Gastrocnemius medialis (tissue), 4 donors: ENCODE measurements at regions of chr11 and their contacts with region 1.

Region 1: GRCh38 chr11:12235947-12236743 is 125.8 kb downstream of the MICAL2 start:
- DNase-seq: peak in 1 of 2 donors; percentile 81
- ATAC-seq: peak; percentile 80 to 81
- H3K4me3 ChIP-seq: no peak overlapping the region
- H3K27ac ChIP-seq: peak overlapping the region; percentile 52 to 92 (median 76)
- H3K4me1 ChIP-seq: peaks cover 7 to 12% of the 10 kb centered on the region in 2 donors
- H3K27me3 ChIP-seq: no peaks in the 10 kb centered on the region
- CTCF ChIP-seq: peak; percentile 55 to 75 (median 69)
- POLR2A ChIP-seq: peak; percentile 27 to 59

Region 2: DNA sequence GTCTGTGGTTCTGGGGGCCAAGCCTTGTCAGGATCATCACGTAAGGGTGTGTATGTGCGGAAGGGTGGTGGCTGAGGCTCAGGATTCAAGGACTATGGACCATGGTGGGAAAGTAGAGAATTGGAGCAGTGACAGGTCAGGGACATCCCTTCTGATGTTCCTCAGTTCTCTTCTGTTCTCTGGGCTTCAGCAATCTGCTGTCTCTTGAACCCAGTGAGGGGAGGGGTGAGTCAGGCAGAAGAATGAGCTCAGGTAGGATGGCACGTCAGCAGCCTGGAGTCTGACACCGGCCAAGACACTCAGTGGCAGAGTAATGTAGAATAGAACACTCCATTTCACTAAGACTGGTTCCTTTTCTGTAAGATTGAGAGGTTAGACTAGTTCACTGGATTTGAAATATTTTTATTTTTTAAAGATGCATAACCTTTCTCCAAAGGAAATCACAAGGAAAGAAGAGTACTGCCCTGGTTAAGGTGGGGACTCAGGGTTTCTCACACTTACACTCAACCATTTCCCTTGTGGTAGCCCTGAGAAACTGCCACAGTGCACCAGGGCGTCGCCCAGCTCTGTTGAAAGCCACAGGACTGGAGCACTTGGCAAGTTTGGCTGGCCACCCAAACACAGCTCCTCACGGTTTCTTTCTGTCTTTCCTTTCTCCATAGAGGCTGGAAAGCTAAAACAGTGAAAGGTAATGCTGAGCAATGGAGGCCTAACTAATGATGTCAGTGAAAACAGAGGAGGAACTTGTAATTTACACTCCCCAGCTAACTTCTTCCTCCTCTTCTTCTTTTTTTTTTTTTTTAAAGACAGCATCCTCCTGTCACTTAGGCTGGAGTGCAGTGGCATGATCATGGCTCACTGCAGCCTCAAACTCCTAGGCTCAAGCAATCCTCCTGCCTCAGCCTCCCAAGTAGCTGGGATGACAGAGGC is 148.8 kb before region 1 on chr11:
- in situ Hi-C with region 1: no loop called
- intact Hi-C with region 1: loop called (anchors 5 kb)
- DNase-seq: peak in 1 of 2 donors; percentile 41
- ATAC-seq: peak in 1 of 2 donors; percentile 21
- H3K4me3 ChIP-seq: no peak overlapping the region
- H3K27ac ChIP-seq: peak overlapping the region; percentile 69 to 84 (median 78)
- H3K4me1 ChIP-seq: peaks cover 16 to 37% of the 10 kb centered on the region in 2 donors
- H3K27me3 ChIP-seq: peaks cover 0 to 3% (median 0%) of the 10 kb centered on the region in 3 donors
- CTCF ChIP-seq: peak in 1 of 5 experiments; percentile 14
- POLR2A ChIP-seq: no peak

Region 3: DNA sequence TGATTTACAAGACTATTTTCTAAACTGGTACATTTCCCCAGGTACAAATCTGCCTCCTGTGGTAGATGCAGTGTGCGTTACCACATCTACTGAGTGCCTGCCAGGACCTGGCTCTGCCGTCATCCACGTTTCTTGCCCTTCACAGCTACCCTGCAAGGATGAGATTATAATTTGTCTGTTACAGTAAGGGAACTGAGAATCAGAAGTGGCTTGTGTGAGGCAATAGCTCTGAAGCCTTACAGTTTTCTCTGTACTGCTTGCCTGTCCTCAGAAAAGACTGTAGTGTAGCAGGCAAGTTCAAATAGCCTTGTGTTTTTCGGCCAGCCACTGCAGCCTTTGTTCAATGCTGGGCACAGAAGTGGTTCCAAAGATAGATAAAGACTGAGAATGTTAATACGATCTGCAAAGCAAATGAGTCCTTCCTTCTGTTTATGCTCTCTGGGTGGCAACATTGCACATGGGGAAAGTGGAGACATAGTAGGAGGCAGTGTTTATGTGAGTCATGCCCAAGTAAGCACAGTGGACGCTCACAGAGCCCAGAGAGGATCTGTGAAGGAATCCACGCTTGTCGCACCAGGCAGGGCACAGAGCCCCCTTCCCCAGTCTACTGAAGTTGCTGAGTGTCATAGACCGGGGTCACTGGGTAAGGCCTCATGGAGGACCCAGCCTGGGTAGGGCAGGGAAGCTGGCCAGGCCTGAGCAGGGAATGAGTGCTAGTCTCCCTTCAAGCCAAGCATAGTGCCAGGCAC is 76.6 kb before region 1 on chr11:
- in situ Hi-C with region 1: no loop called
- intact Hi-C with region 1: loop called (anchors 1 kb)
- DNase-seq: peak; percentile 38 to 49
- ATAC-seq: peak; percentile 90 to 93
- H3K4me3 ChIP-seq: no peak overlapping the region
- H3K27ac ChIP-seq: peak overlapping the region; percentile 62 to 93 (median 74)
- H3K4me1 ChIP-seq: peaks cover 11 to 30% of the 10 kb centered on the region in 2 donors
- H3K27me3 ChIP-seq: no peaks in the 10 kb centered on the region
- CTCF ChIP-seq: no peak
- POLR2A ChIP-seq: peak; percentile 17 to 68

Region 4: DNA sequence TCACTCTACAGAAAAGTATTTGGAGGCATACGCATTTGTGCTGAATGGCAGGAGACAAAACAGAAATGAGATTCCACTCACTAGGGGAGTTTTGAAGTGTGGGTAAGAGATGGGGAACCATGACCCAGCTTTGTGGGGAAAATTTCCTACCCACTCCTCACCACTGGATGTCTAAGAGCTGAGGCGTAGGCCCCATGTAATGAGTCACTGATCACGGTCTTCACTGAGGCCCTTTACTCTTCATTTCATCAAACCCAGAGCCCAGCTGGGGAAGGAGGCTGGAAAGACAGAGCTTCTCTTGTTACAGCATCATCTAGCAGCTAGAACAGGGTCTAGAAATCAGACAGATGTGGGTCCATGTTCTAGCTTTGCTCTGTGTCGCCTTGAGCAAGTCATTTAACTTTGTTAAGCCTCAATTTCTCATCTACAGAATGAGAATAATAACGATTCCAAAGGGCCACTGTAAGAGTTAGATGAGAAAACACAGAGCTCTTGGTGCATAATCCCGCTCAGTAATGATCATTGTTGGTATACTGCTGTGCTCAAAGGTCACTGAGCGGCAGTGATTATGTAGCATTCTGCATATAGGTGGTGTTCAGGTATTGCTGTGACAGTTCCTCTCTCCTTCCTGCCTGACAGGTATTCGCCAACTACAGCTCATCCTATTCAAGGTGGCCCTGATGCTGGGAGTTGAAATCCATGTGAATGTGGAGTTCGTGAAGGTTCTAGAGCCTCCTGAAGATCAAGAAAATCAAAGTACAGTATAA is 28.6 kb before region 1 on chr11:
- in situ Hi-C with region 1: no loop called
- intact Hi-C with region 1: no loop called
- DNase-seq: no peak
- ATAC-seq: no peak
- H3K4me3 ChIP-seq: no peak overlapping the region
- H3K27ac ChIP-seq: no peak overlapping the region
- H3K4me1 ChIP-seq: no peaks in the 10 kb centered on the region
- H3K27me3 ChIP-seq: no peaks in the 10 kb centered on the region
- CTCF ChIP-seq: no peak
- POLR2A ChIP-seq: no peak

Region 5: GRCh38 chr11:12281571-12282478 is 45.7 kb after region 1 on chr11:
- in situ Hi-C with region 1: no loop called
- intact Hi-C with region 1: loop called (anchors 2 kb)
- DNase-seq: peak; percentile 61 to 74
- ATAC-seq: peak; percentile 73 to 88
- H3K4me3 ChIP-seq: no peak overlapping the region
- H3K27ac ChIP-seq: no peak overlapping the region
- H3K4me1 ChIP-seq: peaks cover 3 to 4% of the 10 kb centered on the region in 2 donors
- H3K27me3 ChIP-seq: no peaks in the 10 kb centered on the region
- CTCF ChIP-seq: peak; percentile 95 to 97 (median 97)
- POLR2A ChIP-seq: no peak

Region 6: GRCh38 chr11:12303421-12304149 is 67.4 kb after region 1 on chr11:
- in situ Hi-C with region 1: no loop called
- intact Hi-C with region 1: no loop called
- DNase-seq: no peak
- ATAC-seq: no peak
- H3K4me3 ChIP-seq: no peak overlapping the region
- H3K27ac ChIP-seq: no peak overlapping the region
- H3K4me1 ChIP-seq: no peaks in the 10 kb centered on the region
- H3K27me3 ChIP-seq: no peaks in the 10 kb centered on the region
- CTCF ChIP-seq: no peak
- POLR2A ChIP-seq: no peak

Region 7: GRCh38 chr11:12361682-12362081 is 125.5 kb after region 1 on chr11:
- in situ Hi-C with region 1: no loop called
- intact Hi-C with region 1: no loop called
- DNase-seq: no peak
- ATAC-seq: no peak
- H3K4me3 ChIP-seq: no peak overlapping the region
- H3K27ac ChIP-seq: no peak overlapping the region
- H3K4me1 ChIP-seq: peaks cover 0 to 6% of the 10 kb centered on the region in 2 donors
- H3K27me3 ChIP-seq: no peaks in the 10 kb centered on the region
- CTCF ChIP-seq: no peak
- POLR2A ChIP-seq: no peak

Region 8: DNA sequence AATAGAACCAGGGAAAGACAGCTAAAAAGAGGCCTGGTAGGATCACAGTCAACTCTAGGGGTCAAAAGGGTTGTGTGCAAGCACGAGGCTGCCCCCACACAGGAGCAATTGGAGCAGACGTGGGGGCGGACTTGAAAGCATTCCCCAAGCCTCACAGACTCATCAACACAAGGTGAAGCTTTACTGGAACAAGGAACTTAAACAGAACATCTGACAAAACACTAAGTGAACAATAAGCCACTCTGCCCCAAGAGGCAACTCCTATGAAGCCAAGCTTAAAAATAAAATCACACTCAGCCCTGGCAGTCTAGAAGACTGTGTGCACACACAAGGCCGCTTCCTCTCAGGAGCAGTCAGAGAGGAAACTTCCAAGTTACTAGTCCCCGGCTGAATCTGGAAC is 405.9 kb after region 1 on chr11:
- in situ Hi-C with region 1: no loop called
- intact Hi-C with region 1: no loop called
- DNase-seq: no peak
- ATAC-seq: no peak
- H3K4me3 ChIP-seq: no peak overlapping the region
- H3K27ac ChIP-seq: no peak overlapping the region
- H3K4me1 ChIP-seq: no peaks in the 10 kb centered on the region
- H3K27me3 ChIP-seq: no peaks in the 10 kb centered on the region
- CTCF ChIP-seq: no peak
- POLR2A ChIP-seq: no peak